Posterior cingulate gyrus (tissue), 11 donors: ENCODE measurements at regions of chr20 and their contacts with region 1.

Region 1: GRCh38 chr20:25623736-25624499 is at the start of gene NANP:
- DNase-seq: peak; percentile 88 to 98 (median 92)

Region 2: DNA sequence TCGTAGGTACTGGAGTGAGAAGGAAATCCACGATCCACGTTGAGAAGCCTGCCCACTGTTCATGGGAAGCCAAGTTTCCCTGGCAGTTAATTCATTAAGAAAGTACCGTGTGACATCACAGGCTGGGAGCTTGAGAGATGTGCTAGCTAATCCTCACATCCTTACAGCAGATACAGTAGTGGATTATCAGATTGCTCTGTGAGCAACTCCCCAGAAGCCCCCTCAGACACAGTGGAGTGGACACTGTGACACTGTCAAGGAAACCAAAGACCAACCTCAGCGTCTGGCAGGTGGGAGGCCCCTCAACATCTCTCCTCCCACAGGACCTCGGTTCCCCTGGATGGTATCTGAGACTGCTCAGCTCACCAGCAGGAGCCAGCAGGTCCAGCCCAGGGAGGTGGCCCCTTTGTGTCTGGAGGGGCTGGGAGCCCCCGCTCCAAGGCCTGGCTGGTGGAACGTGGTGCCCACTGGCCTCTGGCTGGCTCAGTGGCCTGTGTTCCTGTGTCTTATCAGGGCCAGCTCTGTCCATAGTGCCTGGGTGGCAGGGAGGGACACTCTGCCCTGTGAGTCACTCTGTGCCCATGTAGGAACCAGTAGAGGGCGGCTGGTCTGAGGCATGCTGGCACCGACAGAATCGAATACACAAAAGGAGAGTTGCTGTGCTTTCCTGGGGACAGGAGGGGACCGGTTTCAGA is 368.8 kb before region 1 on chr20:
- intact Hi-C with region 1: loop called (anchors 10 kb)
- DNase-seq: peak in 6 of 10 donors; percentile 34 to 92 (median 59)

Region 3: DNA sequence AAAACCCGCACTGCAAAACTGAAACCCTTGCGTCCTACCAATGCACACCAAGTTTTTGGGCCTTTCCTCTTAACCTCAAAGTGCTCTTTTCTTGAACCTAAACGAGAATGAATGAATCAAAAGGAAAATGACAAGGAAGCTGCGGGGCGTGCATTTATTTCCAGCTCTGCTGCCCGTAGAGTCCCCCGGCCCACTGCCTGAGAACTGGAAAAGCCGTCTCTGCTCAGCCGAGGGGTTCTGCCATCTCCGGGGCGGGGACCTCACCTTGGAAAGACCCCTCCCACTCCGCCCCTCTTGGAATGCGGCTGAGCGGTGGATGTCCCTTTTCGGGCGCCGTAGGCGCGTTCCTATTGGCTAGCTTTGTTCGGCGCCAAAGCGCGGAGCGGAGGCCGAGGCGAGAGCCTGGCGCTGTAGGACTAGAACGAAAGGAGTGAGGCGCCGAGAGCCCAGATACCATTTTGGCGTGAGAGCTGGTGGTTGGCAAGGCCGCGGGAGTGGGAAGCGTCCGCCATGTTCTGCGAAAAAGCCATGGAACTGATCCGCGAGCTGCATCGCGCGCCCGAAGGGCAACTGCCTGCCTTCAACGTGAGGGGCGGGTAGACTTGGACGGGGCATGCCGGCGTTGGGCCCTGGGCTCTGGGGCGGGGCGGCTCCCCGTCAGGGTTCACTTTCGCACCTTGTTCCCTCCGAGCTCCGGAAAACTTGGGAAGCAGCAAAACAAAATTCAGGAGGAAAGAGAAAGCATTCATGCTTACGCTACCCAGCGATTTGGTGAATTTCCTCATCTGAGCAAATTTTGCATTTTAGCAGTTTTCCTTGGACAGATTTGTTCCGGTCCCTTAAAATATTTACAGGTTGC is 216.4 kb before region 1 on chr20 and contains the start of gene GINS1:
- intact Hi-C with region 1: loop called (anchors 10 kb)
- DNase-seq: peak; percentile 80 to 98 (median 88)

Region 4: DNA sequence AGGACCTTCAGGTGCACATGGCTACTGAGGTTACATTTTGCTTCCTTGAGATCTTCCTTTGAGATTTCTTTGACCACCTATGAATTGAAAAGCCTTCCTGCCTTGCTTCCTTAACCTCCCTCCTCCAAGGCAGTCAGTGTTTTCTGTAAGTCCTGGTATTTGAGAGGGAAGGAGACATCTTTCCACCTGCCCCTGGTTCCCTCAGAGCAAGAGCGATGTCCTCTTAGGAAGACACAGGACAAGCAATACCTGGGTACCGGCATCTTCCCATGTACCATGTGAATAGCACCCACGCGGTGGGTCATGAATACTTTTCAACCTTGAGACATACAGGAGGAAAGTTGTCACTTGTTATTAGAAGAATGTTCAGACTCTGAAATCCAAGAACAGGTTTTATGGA is 179.4 kb before region 1 on chr20:
- intact Hi-C with region 1: no loop called
- DNase-seq: no peak

Region 5: GRCh38 chr20:25696384-25697131 is 72.6 kb after region 1 on chr20 and contains the start of gene ZNF337:
- intact Hi-C with region 1: loop called (anchors 1 kb)
- DNase-seq: peak; percentile 91 to 99 (median 95)

Region 6: GRCh38 chr20:25859649-25860530 is 236.0 kb after region 1 on chr20:
- intact Hi-C with region 1: loop called (anchors 2 kb)
- DNase-seq: peak; percentile 76 to 99 (median 94)